ENCODE measurements at regions of chr3 and their contacts with region 1.

Region 1: GRCh38 chr3:172666873-172667694 is 43.8 kb downstream of the NCEH1 start:
- DNase-seq: peak; percentile 88
- ATAC-seq: peak; percentile 100
- H3K4me3 Mint-ChIP-seq: no peak overlapping the region
- H3K27ac Mint-ChIP-seq: no peak overlapping the region
- H3K4me1 Mint-ChIP-seq: peaks cover 18% of the 10 kb centered on the region
- H3K27me3 Mint-ChIP-seq: no peaks in the 10 kb centered on the region

Region 2: GRCh38 chr3:172648747-172649146 is 18.3 kb before region 1 on chr3:
- CTCF ChIA-PET with region 1: interaction called, 10 read pairs
- DNase-seq: no peak
- ATAC-seq: no peak
- H3K4me3 Mint-ChIP-seq: no peak overlapping the region
- H3K27ac Mint-ChIP-seq: no peak overlapping the region
- H3K4me1 Mint-ChIP-seq: no peaks in the 10 kb centered on the region
- H3K27me3 Mint-ChIP-seq: no peaks in the 10 kb centered on the region